ENCODE measurements at regions of chr11 and their contacts with region 1.

Region 1: DNA sequence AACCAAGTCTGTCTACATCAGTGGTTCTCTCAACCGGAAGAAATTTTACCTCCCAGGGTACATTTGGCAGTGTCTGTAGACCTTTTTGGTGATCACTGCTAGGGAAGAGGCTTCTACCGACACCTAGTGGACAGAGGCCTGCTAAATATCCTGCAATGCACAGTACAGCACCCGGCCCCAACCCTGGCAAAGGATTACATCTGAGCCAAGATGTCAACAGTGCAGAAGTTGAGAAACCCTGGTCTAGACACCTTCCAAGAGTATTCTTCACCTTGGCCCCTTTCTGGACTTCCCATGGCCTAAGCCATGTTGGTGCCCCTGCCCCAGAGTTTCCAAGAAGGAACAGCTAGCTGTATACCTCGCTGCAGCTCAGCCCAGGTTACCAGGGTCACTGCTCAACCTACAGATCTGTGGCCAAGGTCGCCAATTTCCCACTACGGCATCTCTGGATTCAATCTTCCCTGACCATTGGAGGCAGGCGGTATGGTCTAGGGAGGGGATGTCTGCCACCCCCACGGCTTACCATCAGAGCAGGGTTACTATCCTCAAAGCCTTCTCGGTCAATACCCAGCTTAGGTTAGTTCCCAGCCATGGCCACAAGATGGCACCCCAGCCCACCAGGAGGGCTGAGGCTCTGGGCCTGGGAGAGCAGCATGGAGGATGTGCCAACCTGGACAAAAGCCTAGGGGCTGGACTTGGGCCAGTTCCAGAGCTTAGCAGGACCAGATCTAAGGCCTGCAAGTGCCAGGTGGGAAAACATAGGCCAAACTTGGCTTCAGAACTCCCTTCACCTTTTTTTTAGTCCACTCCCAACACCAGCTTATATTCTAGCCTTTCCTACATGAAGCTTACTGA is 3.7 kb upstream of the KCNC1 start:
- DNase-seq: peak; percentile 84
- ATAC-seq: peak; percentile 88
- H3K4me3 Mint-ChIP-seq: no peak overlapping the region
- H3K27ac Mint-ChIP-seq: no peak overlapping the region
- H3K4me1 Mint-ChIP-seq: peaks cover 5% of the 10 kb centered on the region
- H3K27me3 Mint-ChIP-seq: peaks cover 36% of the 10 kb centered on the region

Region 2: GRCh38 chr11:17598700-17599459 is 132.0 kb before region 1 on chr11:
- CTCF ChIA-PET with region 1: interaction called, 17 read pairs
- POLR2A ChIA-PET with region 1: no interaction called
- intact Hi-C with region 1: loop called (anchors 1 kb)
- DNase-seq: peak; percentile 87
- ATAC-seq: peak; percentile 92
- H3K4me3 Mint-ChIP-seq: no peak overlapping the region
- H3K27ac Mint-ChIP-seq: no peak overlapping the region
- H3K4me1 Mint-ChIP-seq: peaks cover 5% of the 10 kb centered on the region
- H3K27me3 Mint-ChIP-seq: peaks cover 2% of the 10 kb centered on the region

Region 3: DNA sequence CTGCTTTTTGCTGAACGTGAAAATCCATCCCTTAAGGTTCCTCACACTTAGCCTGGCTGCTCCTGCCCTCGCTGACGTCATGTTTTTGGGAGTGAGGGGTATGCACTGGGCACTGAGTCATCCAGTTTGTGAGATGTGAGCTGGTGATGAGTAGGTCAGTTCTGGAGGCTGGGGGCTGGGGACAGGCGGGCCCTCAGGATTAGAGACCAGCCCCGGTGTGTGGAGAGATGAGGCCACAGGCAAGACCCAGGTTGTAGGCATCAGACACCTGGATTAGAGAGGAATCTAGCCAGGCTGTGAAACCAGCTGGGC is 12.9 kb after region 1 on chr11:
- CTCF ChIA-PET with region 1: interaction called, 14 read pairs
- POLR2A ChIA-PET with region 1: no interaction called
- intact Hi-C with region 1: no loop called
- DNase-seq: no peak
- ATAC-seq: no peak
- H3K4me3 Mint-ChIP-seq: no peak overlapping the region
- H3K27ac Mint-ChIP-seq: no peak overlapping the region
- H3K4me1 Mint-ChIP-seq: no peaks in the 10 kb centered on the region
- H3K27me3 Mint-ChIP-seq: peaks cover 7% of the 10 kb centered on the region

Region 4: DNA sequence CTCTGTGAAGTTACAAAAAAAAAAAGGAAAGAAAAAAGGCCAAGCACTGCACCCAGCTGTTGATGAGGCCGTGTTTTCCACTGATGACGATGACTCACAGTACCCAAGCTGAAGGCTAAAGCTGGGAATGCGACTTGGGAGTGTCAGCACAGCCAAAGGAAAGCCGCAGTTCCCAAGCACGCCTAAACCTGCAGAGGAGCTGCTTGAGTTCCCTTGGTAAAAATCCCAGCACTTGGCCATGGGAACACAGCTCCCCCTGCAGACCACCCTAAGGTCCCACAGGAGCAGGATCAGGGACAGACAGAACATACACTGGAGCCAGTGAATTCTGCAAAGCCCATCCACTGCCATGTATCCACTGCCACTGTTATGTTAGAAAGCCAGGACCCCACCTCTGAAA is 242.2 kb after region 1 on chr11:
- CTCF ChIA-PET with region 1: interaction called, 115 read pairs
- POLR2A ChIA-PET with region 1: no interaction called
- intact Hi-C with region 1: no loop called
- DNase-seq: peak; percentile 22
- ATAC-seq: no peak
- H3K4me3 Mint-ChIP-seq: no peak overlapping the region
- H3K27ac Mint-ChIP-seq: no peak overlapping the region
- H3K4me1 Mint-ChIP-seq: no peaks in the 10 kb centered on the region
- H3K27me3 Mint-ChIP-seq: no peaks in the 10 kb centered on the region

Region 5: DNA sequence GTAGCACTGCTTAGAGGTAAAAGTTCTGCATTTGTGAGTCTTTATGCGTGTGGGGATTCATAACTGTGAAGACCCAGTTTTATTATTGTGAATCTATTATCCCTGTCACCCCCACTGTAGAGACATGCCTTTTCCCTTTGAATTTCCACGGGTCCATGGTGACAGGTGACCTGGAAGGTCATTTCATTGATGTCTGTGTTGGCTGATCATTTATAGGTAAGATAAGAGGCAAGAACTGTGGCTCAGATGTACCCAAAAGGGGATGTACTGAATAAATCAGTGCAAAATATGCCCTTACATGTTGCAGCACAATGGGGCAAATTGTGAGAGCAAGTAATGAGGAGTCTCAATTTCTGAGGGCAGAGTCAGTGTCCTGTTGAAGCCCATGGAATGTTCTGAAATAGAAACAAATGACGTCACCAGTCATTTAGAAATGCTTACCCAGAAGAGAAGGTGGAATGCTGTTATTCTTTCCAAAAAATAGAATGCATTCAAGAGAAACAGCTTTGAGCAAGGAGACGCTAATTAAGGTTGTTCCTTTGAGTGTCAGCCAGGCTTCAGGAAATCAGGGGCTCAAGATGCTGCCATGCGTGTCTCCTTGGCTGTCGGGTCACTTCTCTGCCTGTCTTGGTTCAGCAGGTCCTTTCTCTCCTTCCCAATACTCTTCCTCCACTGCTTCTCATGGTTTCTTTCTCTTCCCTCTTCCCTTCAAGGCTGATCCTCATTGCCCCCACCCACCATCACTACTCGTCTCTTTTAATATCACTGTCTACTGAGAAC is 1628.6 kb after region 1 on chr11:
- CTCF ChIA-PET with region 1: no interaction called
- POLR2A ChIA-PET with region 1: no interaction called
- intact Hi-C with region 1: no loop called
- DNase-seq: no peak
- ATAC-seq: no peak
- H3K4me3 Mint-ChIP-seq: no peak overlapping the region
- H3K27ac Mint-ChIP-seq: no peak overlapping the region
- H3K4me1 Mint-ChIP-seq: no peaks in the 10 kb centered on the region
- H3K27me3 Mint-ChIP-seq: peaks cover 14% of the 10 kb centered on the region

Measured in activated CD4-positive, alpha-beta T cell treated with anti-CD3 and anti-CD28 coated beads for 36 hours (primary cell).